ENCODE measurements at regions of chr1 and their contacts with region 1.

Region 1: GRCh38 chr1:63575340-63575826 is 17.8 kb upstream of the PGM1 start:
- DNase-seq: peak; percentile 17 to 53 (median 31)
- H3K4me3 ChIP-seq: no peak overlapping the region
- H3K27ac ChIP-seq: no peak overlapping the region
- H3K4me1 ChIP-seq: no peaks in the 10 kb centered on the region
- H3K27me3 ChIP-seq: no peaks in the 10 kb centered on the region

Region 2: DNA sequence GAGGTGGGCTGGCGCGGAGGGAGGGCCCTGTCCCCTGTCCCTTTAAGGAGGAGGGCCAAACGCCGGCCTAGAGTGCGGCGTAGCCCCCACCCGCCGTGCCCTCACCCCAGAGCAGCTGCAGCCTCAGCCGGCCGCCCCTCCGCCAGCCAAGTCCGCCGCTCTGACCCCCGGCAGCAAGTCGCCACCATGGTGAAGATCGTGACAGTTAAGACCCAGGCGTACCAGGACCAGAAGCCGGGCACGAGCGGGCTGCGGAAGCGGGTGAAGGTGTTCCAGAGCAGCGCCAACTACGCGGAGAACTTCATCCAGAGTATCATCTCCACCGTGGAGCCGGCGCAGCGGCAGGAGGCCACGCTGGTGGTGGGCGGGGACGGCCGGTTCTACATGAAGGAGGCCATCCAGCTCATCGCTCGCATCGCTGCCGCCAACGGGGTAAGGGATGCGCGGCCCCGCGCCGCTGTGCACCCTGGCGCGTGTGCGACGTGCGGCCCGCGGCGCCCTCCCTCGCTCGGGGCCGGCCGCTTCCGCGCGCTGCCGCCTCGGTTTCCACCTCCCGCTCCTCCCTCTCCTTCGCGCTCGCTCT is 18.0 kb after region 1 on chr1 and contains the start of gene PGM1:
- CTCF ChIA-PET with region 1: interaction called, 16 read pairs
- POLR2A ChIA-PET with region 1: no interaction called
- DNase-seq: peak; percentile 77 to 90 (median 85)
- H3K4me3 ChIP-seq: peak within 1 kb of the TSS; percentile 79 to 94 (median 88)
- H3K27ac ChIP-seq: peak within 1 kb of the TSS; percentile 40 to 82
- H3K4me1 ChIP-seq: peaks cover 0 to 12% (median 8%) of the 10 kb centered on the region in 4 experiments
- H3K27me3 ChIP-seq: no peaks in the 10 kb centered on the region

Measured in common myeloid progenitor, CD34-positive (primary cell).